ENCODE measurements at regions of chr11 and their contacts with region 1.

Region 1: GRCh38 chr11:57800444-57801182 is 39.0 kb downstream of the CTNND1 start:
- DNase-seq: peak; percentile 86
- H3K4me3 ChIP-seq: no peak overlapping the region
- H3K27ac ChIP-seq: peak overlapping the region; percentile 84
- H3K4me1 ChIP-seq: peaks cover 30% of the 10 kb centered on the region
- H3K27me3 ChIP-seq: no peaks in the 10 kb centered on the region
- CTCF ChIP-seq: peak; percentile 74 to 80

Region 2: GRCh38 chr11:57567515-57568329 is 232.9 kb before region 1 on chr11 and contains the start of gene UBE2L6:
- CTCF ChIA-PET with region 1: no interaction called
- dilution Hi-C with region 1: no loop called
- in situ Hi-C with region 1: no loop called
- intact Hi-C with region 1: loop called (anchors 1 kb)
- DNase-seq: no peak
- H3K4me3 ChIP-seq: peak within 1 kb of the TSS; percentile 77 to 96 (median 90)
- H3K27ac ChIP-seq: peak within 1 kb of the TSS; percentile 44
- H3K4me1 ChIP-seq: peaks cover 27% of the 10 kb centered on the region
- H3K27me3 ChIP-seq: no peaks in the 10 kb centered on the region
- CTCF ChIP-seq: no peak
- total RNA-seq, gene UBE2L6: 34.2 to 46.8 TPM

Region 3: DNA sequence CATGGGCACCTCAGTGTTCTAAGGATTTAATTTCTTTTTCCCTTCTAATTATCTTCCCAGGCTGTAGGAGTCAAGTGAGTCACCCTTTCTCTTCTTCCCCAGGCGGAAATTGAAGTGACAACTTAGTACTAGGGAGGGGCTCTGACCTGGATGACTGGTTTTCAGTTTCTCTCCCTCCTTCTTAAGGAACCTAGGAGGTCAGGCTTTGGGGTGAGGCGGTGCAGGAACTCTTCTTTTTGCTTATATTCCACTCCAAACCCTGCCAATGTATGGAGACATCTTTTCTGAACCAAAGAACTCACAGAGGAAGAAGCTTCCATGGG is 120.1 kb before region 1 on chr11:
- CTCF ChIA-PET with region 1: no interaction called
- dilution Hi-C with region 1: loop called (anchors 10 kb)
- in situ Hi-C with region 1: no loop called
- intact Hi-C with region 1: no loop called
- DNase-seq: peak; percentile 73
- H3K4me3 ChIP-seq: no peak overlapping the region
- H3K27ac ChIP-seq: peak overlapping the region; percentile 31
- H3K4me1 ChIP-seq: peaks cover 25% of the 10 kb centered on the region
- H3K27me3 ChIP-seq: no peaks in the 10 kb centered on the region
- CTCF ChIP-seq: no peak

Region 4: GRCh38 chr11:57741132-57742086 is 59.2 kb before region 1 on chr11 and contains the start of gene SELENOH:
- CTCF ChIA-PET with region 1: no interaction called
- dilution Hi-C with region 1: loop called (anchors 5 kb)
- in situ Hi-C with region 1: no loop called
- intact Hi-C with region 1: no loop called
- DNase-seq: peak; percentile 95
- H3K4me3 ChIP-seq: peak within 1 kb of the TSS; percentile 67 to 99 (median 81)
- H3K27ac ChIP-seq: peak within 1 kb of the TSS; percentile 65
- H3K4me1 ChIP-seq: peaks cover 6% of the 10 kb centered on the region
- H3K27me3 ChIP-seq: no peaks in the 10 kb centered on the region
- CTCF ChIP-seq: no peak
- total RNA-seq, gene SELENOH: 63.5 to 115 TPM

Region 5: DNA sequence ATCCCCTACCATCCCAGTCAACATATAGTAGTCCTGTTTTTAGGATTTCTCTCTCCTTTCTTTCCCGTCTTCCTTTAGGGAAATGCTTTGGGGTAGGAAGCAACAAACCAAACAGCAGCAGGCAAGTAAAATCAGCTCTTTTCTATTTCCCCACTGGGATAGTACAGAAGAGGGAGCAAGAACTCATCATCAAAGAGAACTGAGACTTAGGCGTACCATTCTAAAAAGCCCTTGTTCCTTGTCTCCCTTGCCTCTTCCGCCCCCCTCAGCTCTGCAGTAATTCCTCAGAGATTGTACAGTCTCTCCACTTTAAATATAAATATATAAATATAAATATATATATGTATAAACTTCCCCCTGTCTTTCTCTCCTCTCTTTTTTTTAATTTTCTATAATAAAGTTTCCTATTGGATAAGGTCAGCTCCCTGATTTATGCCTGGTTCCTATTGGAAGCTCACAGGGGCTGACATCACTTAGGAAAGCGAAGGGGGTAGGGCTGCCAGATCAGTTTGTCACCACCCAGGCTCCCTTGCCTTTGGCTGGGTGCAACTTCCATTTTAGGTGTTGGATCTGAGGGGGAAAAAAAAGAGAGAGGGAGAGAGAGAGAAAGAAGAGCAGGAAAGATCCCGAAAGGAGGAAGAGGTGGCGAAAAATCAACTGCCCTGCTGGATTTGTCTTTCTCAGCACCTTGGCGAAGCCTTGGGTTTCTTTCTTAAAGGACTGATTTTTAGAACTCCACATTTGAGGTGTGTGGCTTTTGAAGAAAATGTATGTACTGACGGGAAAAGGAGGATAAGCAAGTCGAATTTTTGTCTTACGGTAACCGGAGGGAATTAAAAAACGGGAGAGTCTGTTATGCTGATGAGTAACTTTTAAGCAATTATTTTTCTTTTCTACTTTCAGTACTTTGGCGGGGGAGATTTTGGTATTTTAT is 39.0 kb before region 1 on chr11 and contains the start of gene CTNND1:
- CTCF ChIA-PET with region 1: interaction called, 22 read pairs
- dilution Hi-C with region 1: no loop called
- in situ Hi-C with region 1: loop called (anchors 5 kb)
- intact Hi-C with region 1: loop called (anchors 1 kb)
- DNase-seq: peak; percentile 97
- H3K4me3 ChIP-seq: peak within 1 kb of the TSS; percentile 51 to 98 (median 93)
- H3K27ac ChIP-seq: peak within 1 kb of the TSS; percentile 98
- H3K4me1 ChIP-seq: peaks cover 23% of the 10 kb centered on the region
- H3K27me3 ChIP-seq: no peaks in the 10 kb centered on the region
- CTCF ChIP-seq: peak in 1 of 2 donors; percentile 10
- total RNA-seq, gene CTNND1: 164 to 212 TPM

Region 6: GRCh38 chr11:58524232-58525036 is 723.8 kb after region 1 on chr11:
- CTCF ChIA-PET with region 1: no interaction called
- dilution Hi-C with region 1: loop called (anchors 25 kb)
- in situ Hi-C with region 1: loop called in 1 of 2 experiments (anchors 25 kb)
- intact Hi-C with region 1: no loop called
- DNase-seq: peak; percentile 63
- H3K4me3 ChIP-seq: no peak overlapping the region
- H3K27ac ChIP-seq: no peak overlapping the region
- H3K4me1 ChIP-seq: peaks cover 3% of the 10 kb centered on the region
- H3K27me3 ChIP-seq: no peaks in the 10 kb centered on the region
- CTCF ChIP-seq: peak; percentile 90 to 98

Measured in mammary epithelial cell (primary cell).